ENCODE measurements at regions of chr7 and their contacts with region 1.

Region 1: GRCh38 chr7:27179503-27180430 is 5.3 kb downstream of the HOXA11 start:
- DNase-seq: peak; percentile 34 to 45
- H3K4me3 ChIP-seq: no peak overlapping the region
- H3K27ac ChIP-seq: no peak overlapping the region
- H3K4me1 ChIP-seq: peaks cover 15 to 24% of the 10 kb centered on the region in 2 donors
- H3K27me3 ChIP-seq: peaks cover 88% of the 10 kb centered on the region
- CTCF ChIP-seq: peak; percentile 35 to 85 (median 48)
- POLR2A ChIP-seq: no peak

Region 2: GRCh38 chr7:26083113-26083512 is 1096.7 kb before region 1 on chr7:
- intact Hi-C with region 1: loop called (anchors 10 kb)
- DNase-seq: no peak
- H3K4me3 ChIP-seq: no peak overlapping the region
- H3K27ac ChIP-seq: no peak overlapping the region
- H3K4me1 ChIP-seq: no peaks in the 10 kb centered on the region
- H3K27me3 ChIP-seq: no peaks in the 10 kb centered on the region
- CTCF ChIP-seq: no peak
- POLR2A ChIP-seq: no peak

Region 3: GRCh38 chr7:27434756-27435400 is 255.1 kb after region 1 on chr7:
- intact Hi-C with region 1: no loop called
- DNase-seq: no peak
- H3K4me3 ChIP-seq: no peak overlapping the region
- H3K27ac ChIP-seq: no peak overlapping the region
- H3K4me1 ChIP-seq: no peaks in the 10 kb centered on the region
- H3K27me3 ChIP-seq: no peaks in the 10 kb centered on the region
- CTCF ChIP-seq: no peak
- POLR2A ChIP-seq: no peak

Measured in thyroid gland (tissue), 4 donors.